A673 (cell line): ENCODE measurements at regions of chr1 and their contacts with region 1.

Region 1: DNA sequence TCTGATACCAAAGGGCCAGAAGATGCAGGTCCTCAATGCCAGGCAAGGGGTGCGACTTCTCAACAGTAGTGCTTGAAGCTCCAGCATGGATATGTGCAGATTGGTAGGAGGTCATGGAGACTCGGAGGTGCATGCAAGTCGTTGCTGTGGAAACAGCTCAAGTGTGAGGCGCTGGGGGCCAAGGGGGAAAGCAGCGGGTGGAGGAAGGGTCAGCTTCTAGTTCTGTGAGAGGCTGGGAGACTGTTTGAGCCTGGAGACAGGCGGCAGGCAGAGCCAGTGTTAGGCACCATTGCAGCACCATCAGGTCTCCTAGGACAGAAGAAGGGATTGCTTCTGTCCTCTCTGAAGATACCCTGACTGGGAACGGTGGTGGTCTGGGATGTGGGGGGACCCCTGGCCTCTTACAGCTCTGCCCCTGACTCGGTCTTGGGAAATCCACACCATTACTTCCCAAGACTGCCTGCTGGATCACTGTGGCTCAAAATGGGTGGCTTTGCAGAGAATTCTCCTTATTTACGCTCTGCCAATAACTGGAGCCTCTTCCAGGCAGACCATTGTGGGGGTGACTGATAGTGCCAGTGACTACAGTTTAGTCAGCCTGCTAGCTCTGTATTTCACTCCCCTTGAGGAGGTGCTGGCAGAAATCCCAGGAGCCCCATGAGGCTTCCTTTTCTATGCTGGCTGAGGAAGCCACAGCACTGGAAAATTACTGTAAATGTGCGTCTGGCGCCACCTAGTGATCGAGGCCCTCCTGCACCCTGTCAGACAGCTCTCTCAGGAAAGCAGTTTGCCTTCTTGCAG is 46.3 kb upstream of the VANGL1 start:
- DNase-seq: peak; percentile 97
- H3K4me3 ChIP-seq: no peak overlapping the region
- H3K27ac ChIP-seq: no peak overlapping the region
- H3K4me1 ChIP-seq: peaks cover 6% of the 10 kb centered on the region
- H3K27me3 ChIP-seq: no peaks in the 10 kb centered on the region
- CTCF ChIP-seq: peak; percentile 97

Region 2: GRCh38 chr1:114979278-114979891 is 616.1 kb before region 1 on chr1:
- CTCF ChIA-PET with region 1: interaction called, 3 read pairs
- POLR2A ChIA-PET with region 1: no interaction called
- intact Hi-C with region 1: loop called (anchors 1 kb)
- DNase-seq: peak; percentile 65
- H3K4me3 ChIP-seq: no peak overlapping the region
- H3K27ac ChIP-seq: no peak overlapping the region
- H3K4me1 ChIP-seq: no peaks in the 10 kb centered on the region
- H3K27me3 ChIP-seq: peaks cover 14% of the 10 kb centered on the region
- CTCF ChIP-seq: peak; percentile 79

Region 3: GRCh38 chr1:115138968-115139367 is 456.5 kb before region 1 on chr1:
- CTCF ChIA-PET with region 1: interaction called, 42 read pairs
- POLR2A ChIA-PET with region 1: no interaction called
- intact Hi-C with region 1: loop called (anchors 1 kb)
- DNase-seq: peak; percentile 94
- H3K4me3 ChIP-seq: no peak overlapping the region
- H3K27ac ChIP-seq: no peak overlapping the region
- H3K4me1 ChIP-seq: no peaks in the 10 kb centered on the region
- H3K27me3 ChIP-seq: peaks cover 4% of the 10 kb centered on the region
- CTCF ChIP-seq: peak; percentile 95

Region 4: DNA sequence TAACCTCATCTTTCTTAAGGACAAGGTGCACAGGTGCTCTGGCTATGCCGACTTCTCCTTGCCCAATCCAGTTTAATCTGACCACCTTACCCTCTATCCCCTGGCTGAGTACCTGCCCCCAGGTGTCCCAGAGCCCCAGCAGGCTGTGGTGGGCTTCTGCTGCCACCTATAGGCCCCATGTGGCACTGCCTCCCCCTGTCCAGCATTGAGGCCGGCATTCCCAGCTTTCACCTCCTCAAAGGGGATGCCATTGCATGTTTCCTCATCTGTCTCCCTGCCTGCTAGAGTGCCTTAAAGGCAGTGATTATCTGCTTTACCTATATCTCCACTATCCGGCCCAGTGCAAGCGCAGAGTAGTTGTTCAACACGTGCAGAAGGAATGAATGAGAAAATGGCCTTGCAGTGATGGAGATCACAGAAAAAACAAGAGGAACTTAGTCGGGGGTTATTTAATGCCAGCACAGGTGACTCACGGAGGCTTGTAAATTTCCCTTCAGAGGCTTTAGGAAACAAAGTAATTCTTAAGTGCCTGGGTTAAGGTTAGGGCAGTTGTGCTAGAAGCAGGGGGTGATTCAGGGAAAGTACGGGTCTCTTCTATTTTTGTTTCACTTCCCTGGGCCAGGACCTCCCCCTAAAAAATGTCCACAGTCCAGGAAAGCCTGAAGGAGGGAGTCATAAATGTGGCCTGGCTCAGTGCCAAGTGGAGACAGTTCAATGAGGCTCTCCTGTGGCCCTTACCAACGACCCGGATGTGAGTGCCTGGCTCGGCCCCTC is 125.6 kb before region 1 on chr1:
- CTCF ChIA-PET with region 1: interaction called, 13 read pairs
- POLR2A ChIA-PET with region 1: no interaction called
- intact Hi-C with region 1: no loop called
- DNase-seq: peak; percentile 27
- H3K4me3 ChIP-seq: no peak overlapping the region
- H3K27ac ChIP-seq: no peak overlapping the region
- H3K4me1 ChIP-seq: no peaks in the 10 kb centered on the region
- H3K27me3 ChIP-seq: peaks cover 22% of the 10 kb centered on the region
- CTCF ChIP-seq: peak; percentile 97

Region 5: DNA sequence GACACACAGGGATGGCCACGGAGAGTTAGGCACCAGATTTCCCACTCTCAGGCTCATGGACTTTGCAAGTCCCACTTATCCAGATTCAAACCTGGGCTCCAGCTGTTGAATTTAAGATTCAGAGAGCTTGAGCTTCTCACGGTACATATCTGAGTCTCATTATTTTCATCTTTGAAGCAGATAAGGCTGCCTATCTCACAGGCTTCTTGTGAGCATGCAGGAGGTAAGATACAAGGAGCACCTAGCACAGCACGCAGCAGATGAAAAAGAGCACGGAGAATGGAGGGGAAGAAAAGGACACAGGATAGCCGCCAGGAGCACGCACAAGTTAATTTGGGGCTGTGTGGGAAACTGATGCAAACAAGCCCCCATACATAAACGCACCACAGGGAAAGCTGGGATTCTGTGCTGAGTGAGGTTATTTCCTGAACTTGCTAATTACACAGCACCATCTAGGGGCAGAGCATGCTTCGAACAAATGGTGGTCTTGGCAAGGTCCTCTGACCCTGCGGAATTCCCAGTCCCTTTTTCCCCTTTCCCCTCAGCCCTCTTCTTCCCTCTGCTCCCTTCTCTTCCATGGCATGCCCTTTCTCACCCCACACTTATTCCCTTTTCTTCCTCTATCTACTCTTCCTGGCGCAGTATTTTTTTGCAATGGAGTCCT is 88.4 kb before region 1 on chr1:
- CTCF ChIA-PET with region 1: interaction called, 4 read pairs
- POLR2A ChIA-PET with region 1: no interaction called
- intact Hi-C with region 1: loop called (anchors 5 kb)
- DNase-seq: peak; percentile 67
- H3K4me3 ChIP-seq: no peak overlapping the region
- H3K27ac ChIP-seq: no peak overlapping the region
- H3K4me1 ChIP-seq: peaks cover 5% of the 10 kb centered on the region
- H3K27me3 ChIP-seq: peaks cover 5% of the 10 kb centered on the region
- CTCF ChIP-seq: peak; percentile 75

Region 6: GRCh38 chr1:115545791-115546733 is 49.4 kb before region 1 on chr1:
- CTCF ChIA-PET with region 1: no interaction called
- POLR2A ChIA-PET with region 1: no interaction called
- intact Hi-C with region 1: loop called (anchors 5 kb)
- DNase-seq: peak; percentile 80
- H3K4me3 ChIP-seq: no peak overlapping the region
- H3K27ac ChIP-seq: no peak overlapping the region
- H3K4me1 ChIP-seq: peaks cover 8% of the 10 kb centered on the region
- H3K27me3 ChIP-seq: no peaks in the 10 kb centered on the region
- CTCF ChIP-seq: peak; percentile 64